ENCODE measurements at regions of chr15 and their contacts with region 1.

Region 1: GRCh38 chr15:96374499-96374898 is 44.0 kb downstream of the NR2F2 start:
- DNase-seq: no peak
- H3K4me3 ChIP-seq: no peak overlapping the region
- H3K27ac ChIP-seq: no peak overlapping the region
- H3K4me1 ChIP-seq: no peaks in the 10 kb centered on the region
- H3K27me3 ChIP-seq: peaks cover 12% of the 10 kb centered on the region
- CTCF ChIP-seq: no peak
- EP300 ChIP-seq: no peak
- POLR2A ChIP-seq: no peak

Region 2: GRCh38 chr15:96422125-96422524 is 47.6 kb after region 1 on chr15:
- in situ Hi-C with region 1: no loop called
- intact Hi-C with region 1: loop called (anchors 2 kb)
- DNase-seq: no peak
- H3K4me3 ChIP-seq: no peak overlapping the region
- H3K27ac ChIP-seq: no peak overlapping the region
- H3K4me1 ChIP-seq: peaks cover 0 to 5% (median 0%) of the 10 kb centered on the region in 4 donors
- H3K27me3 ChIP-seq: peaks cover 80% of the 10 kb centered on the region
- CTCF ChIP-seq: no peak
- EP300 ChIP-seq: no peak
- POLR2A ChIP-seq: no peak

Measured in transverse colon (tissue), 4 donors.